PC-9 (cell line): ENCODE measurements at regions of chr9 and their contacts with region 1.

Region 1: GRCh38 chr9:124532897-124533296 is 25.7 kb upstream of the NR5A1 start:
- DNase-seq: no peak
- H3K4me3 ChIP-seq: no peak overlapping the region
- H3K27ac ChIP-seq: no peak overlapping the region
- H3K4me1 ChIP-seq: peaks cover 14% of the 10 kb centered on the region
- H3K27me3 ChIP-seq: no peaks in the 10 kb centered on the region
- CTCF ChIP-seq: no peak

Region 2: GRCh38 chr9:123544007-123544827 is 988.7 kb before region 1 on chr9:
- CTCF ChIA-PET with region 1: interaction called, 4 read pairs
- POLR2A ChIA-PET with region 1: no interaction called
- intact Hi-C with region 1: loop called (anchors 10 kb)
- DNase-seq: peak in 1 of 2 experiments; percentile 15
- H3K4me3 ChIP-seq: no peak overlapping the region
- H3K27ac ChIP-seq: no peak overlapping the region
- H3K4me1 ChIP-seq: no peaks in the 10 kb centered on the region
- H3K27me3 ChIP-seq: no peaks in the 10 kb centered on the region
- CTCF ChIP-seq: peak; percentile 89

Region 3: DNA sequence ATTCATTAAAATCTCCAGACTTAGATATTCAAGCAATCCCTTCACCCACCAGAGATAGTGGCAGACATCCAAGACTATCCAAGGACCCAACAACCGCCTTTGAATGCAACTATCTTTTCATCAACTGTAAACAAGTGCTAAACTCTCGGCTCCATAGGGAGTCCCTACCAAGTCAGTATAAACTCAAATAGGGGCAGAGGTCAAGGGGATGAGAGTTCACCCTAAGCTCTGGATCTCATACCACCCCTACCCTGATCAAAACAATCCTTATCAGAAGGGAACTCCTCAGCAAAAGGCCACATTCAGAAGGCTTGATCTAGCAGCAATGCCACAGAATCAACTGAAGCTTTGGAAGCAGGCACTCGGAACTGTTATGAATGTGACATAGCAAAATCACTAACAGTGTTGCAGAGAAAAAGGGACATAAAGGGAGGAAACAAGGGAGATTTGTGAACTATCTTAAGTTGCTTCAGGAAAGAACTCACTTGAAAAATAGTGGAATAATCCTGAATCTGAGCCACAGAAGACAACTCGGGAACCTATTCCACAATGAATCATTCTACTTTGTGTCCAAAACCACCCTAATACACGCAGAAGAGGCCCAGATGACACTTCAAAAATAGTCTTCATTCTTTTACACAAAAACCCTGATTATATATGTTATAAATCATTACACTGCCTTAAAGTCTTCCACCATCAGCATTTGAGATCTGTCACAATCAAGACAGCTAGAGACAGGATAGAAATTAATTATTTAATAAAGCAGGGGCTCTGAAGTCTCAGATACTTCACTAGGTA is 188.4 kb after region 1 on chr9:
- CTCF ChIA-PET with region 1: interaction called, 10 read pairs
- POLR2A ChIA-PET with region 1: no interaction called
- intact Hi-C with region 1: no loop called
- DNase-seq: peak; percentile 18 to 54
- H3K4me3 ChIP-seq: no peak overlapping the region
- H3K27ac ChIP-seq: peak overlapping the region; percentile 16; the same call in 1 of the 2 replicates
- H3K4me1 ChIP-seq: peaks cover 6% of the 10 kb centered on the region; the same call in 1 of the 2 replicates
- H3K27me3 ChIP-seq: no peaks in the 10 kb centered on the region
- CTCF ChIP-seq: no peak

Region 4: DNA sequence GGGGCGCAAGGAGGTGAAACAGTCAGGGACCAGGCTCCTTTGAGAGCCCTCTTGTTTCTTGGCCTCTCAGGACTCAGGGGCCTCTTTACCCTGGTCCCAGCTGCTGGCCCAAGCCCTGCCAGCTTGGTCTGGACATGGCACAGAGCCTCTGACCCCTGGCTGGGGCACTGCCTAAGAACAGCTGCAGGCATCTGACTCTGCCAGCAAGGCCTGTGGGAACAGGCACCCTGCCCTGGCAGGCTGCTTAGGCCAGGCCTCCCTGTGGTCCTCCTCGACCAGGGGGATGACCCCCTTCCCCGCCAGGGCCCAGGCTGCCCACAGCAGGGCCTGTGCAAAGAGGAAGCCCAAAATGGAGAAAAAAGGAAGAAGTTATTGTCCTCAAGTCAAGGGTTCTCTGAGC is 269.5 kb after region 1 on chr9:
- CTCF ChIA-PET with region 1: no interaction called
- POLR2A ChIA-PET with region 1: no interaction called
- intact Hi-C with region 1: no loop called
- DNase-seq: no peak
- H3K4me3 ChIP-seq: no peak overlapping the region
- H3K27ac ChIP-seq: no peak overlapping the region
- H3K4me1 ChIP-seq: no peaks in the 10 kb centered on the region
- H3K27me3 ChIP-seq: no peaks in the 10 kb centered on the region
- CTCF ChIP-seq: no peak

Region 5: DNA sequence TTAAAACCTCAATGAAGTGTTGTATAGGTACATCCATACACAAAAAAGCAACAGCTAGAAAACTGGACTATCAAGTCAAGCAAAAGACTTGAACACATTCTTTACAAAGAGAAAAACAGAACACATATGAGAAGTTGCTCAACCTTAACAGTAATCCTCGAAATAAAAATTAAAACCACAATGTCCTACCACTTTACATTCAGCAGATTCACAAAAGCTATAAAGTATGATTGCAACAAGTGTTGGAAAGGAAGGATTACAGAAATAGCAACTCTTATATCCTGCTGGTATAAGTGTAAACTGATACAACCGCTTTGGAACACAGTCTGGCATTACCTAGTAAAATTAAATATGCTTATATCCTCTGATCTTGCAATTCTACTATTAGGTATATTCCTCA is 436.5 kb after region 1 on chr9:
- CTCF ChIA-PET with region 1: interaction called, 11 read pairs
- POLR2A ChIA-PET with region 1: no interaction called
- intact Hi-C with region 1: no loop called
- DNase-seq: no peak
- H3K4me3 ChIP-seq: no peak overlapping the region
- H3K27ac ChIP-seq: no peak overlapping the region
- H3K4me1 ChIP-seq: no peaks in the 10 kb centered on the region
- H3K27me3 ChIP-seq: no peaks in the 10 kb centered on the region
- CTCF ChIP-seq: no peak